ENCODE measurements at regions of chr1 and their contacts with region 1.

Region 1: GRCh38 chr1:157969697-157970485 is 23.6 kb upstream of the KIRREL1 start:
- DNase-seq: peak; percentile 90
- H3K4me3 ChIP-seq: no peak overlapping the region
- H3K27ac ChIP-seq: peak overlapping the region; percentile 62
- H3K4me1 ChIP-seq: peaks cover 29% of the 10 kb centered on the region
- H3K27me3 ChIP-seq: no peaks in the 10 kb centered on the region
- CTCF ChIP-seq: peak; percentile 86 to 90

Region 2: DNA sequence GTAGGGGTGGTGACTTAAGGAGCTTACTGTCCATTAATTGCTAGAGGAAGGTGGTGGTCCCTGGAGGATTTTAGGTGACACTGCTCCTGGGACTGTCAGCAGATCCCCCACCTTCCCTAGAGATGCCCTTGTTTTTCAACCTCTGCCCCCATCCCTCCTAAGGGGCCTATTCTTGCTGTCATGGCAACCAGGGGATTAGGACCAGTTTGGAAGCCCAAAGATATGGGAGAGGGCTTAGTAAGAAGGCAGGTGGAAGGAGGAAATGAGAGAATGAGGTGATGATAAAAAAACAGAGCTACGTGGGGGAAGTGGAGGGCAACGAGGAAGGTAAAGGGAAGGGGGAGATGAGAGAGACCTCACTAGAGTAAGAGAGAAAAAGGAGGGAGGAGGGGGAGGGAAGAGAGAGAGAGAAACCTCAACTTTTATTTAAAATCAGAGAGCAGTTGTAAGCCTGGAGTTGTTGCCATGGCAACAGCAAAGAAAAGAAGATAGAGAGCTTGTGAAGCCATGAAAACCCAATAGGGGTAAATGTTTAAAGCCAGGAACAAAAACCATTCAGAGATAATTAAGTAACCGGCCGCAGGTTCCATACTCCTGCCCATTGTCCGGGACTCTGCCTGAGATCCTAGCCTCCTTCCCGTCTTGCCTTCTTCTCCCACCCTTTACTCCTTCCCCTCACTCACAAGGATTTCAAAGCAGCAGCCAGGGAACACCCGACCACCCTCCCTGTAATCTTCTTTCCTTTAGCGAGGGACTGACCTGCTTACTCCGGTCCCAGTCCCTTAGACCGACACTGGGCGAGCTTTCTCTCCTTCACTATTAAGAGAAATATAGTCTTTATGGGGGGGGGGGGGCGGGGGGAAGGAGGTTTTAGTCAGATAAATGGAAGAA is 44.2 kb after region 1 on chr1:
- CTCF ChIA-PET with region 1: no interaction called
- dilution Hi-C with region 1: no loop called
- in situ Hi-C with region 1: no loop called
- intact Hi-C with region 1: no loop called
- DNase-seq: no peak
- H3K4me3 ChIP-seq: no peak overlapping the region
- H3K27ac ChIP-seq: peak overlapping the region; percentile 14
- H3K4me1 ChIP-seq: peaks cover 93% of the 10 kb centered on the region
- H3K27me3 ChIP-seq: no peaks in the 10 kb centered on the region
- CTCF ChIP-seq: no peak

Region 3: GRCh38 chr1:158035976-158036583 is 66.2 kb after region 1 on chr1:
- CTCF ChIA-PET with region 1: no interaction called
- dilution Hi-C with region 1: no loop called
- in situ Hi-C with region 1: no loop called
- intact Hi-C with region 1: loop called (anchors 1 kb)
- DNase-seq: peak; percentile 24
- H3K4me3 ChIP-seq: no peak overlapping the region
- H3K27ac ChIP-seq: no peak overlapping the region
- H3K4me1 ChIP-seq: peaks cover 30% of the 10 kb centered on the region
- H3K27me3 ChIP-seq: no peaks in the 10 kb centered on the region
- CTCF ChIP-seq: peak; percentile 70 to 72

Region 4: GRCh38 chr1:158087320-158087927 is 117.5 kb after region 1 on chr1:
- CTCF ChIA-PET with region 1: interaction called, 4 read pairs
- dilution Hi-C with region 1: no loop called
- in situ Hi-C with region 1: no loop called
- intact Hi-C with region 1: loop called (anchors 1 kb)
- DNase-seq: peak; percentile 35
- H3K4me3 ChIP-seq: no peak overlapping the region
- H3K27ac ChIP-seq: no peak overlapping the region
- H3K4me1 ChIP-seq: no peaks in the 10 kb centered on the region
- H3K27me3 ChIP-seq: no peaks in the 10 kb centered on the region
- CTCF ChIP-seq: peak; percentile 86 to 92

Region 5: GRCh38 chr1:158112994-158113758 is 143.3 kb after region 1 on chr1:
- CTCF ChIA-PET with region 1: interaction called, 5 read pairs
- dilution Hi-C with region 1: no loop called
- in situ Hi-C with region 1: no loop called
- intact Hi-C with region 1: loop called (anchors 2 kb)
- DNase-seq: no peak
- H3K4me3 ChIP-seq: peak overlapping the region; percentile 33 to 43 (median 38)
- H3K27ac ChIP-seq: no peak overlapping the region
- H3K4me1 ChIP-seq: peaks cover 4% of the 10 kb centered on the region
- H3K27me3 ChIP-seq: no peaks in the 10 kb centered on the region
- CTCF ChIP-seq: peak; percentile 14 to 37

Region 6: DNA sequence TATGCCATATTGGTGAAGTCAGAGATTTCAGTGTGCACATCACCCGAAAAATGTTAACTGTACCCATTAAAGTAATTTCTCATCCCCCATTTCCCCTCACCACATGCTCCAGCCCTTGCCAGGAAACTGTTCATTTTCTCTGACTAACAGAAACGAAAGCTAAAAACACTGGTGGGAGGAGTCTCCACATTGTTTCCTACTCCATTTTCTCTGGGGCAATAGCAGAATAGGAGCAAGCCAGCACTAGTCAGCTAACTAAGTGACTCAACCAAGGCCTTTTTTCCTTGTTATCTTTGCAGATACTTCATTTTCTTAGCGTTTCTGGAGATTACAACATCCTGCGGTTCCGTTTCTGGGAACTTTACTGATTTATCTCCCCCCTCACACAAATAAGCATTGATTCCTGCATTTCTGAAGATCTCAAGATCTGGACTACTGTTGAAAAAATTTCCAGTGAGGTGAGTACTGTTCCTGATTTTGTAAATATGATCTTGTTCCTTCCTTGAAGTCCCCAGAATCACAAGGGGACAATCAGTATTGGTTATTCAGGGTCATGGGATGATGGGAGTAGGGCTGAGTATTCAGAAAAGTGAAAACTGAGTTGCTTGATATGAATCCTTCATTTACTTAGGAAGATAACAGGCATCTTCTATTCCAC is 1039.9 kb after region 1 on chr1 and contains the start of gene IFI16:
- CTCF ChIA-PET with region 1: no interaction called
- dilution Hi-C with region 1: no loop called
- in situ Hi-C with region 1: no loop called
- intact Hi-C with region 1: loop called (anchors 1 kb)
- DNase-seq: peak; percentile 94
- H3K4me3 ChIP-seq: peak within 1 kb of the TSS; percentile 54 to 84 (median 79)
- H3K27ac ChIP-seq: peak within 1 kb of the TSS; percentile 96
- H3K4me1 ChIP-seq: peaks cover 18% of the 10 kb centered on the region
- H3K27me3 ChIP-seq: no peaks in the 10 kb centered on the region
- CTCF ChIP-seq: no peak
- total RNA-seq, gene IFI16: 57.0 to 93.4 TPM

Measured in mammary epithelial cell (primary cell).